Astrocyte of the cerebellum (primary cell): ENCODE measurements at regions of chr2 and their contacts with region 1.

Region 1: GRCh38 chr2:157194097-157194688 is 63.3 kb upstream of the GALNT5 start:
- DNase-seq: peak; percentile 64
- H3K4me3 ChIP-seq: no peak overlapping the region
- CTCF ChIP-seq: peak; percentile 69

Region 2: DNA sequence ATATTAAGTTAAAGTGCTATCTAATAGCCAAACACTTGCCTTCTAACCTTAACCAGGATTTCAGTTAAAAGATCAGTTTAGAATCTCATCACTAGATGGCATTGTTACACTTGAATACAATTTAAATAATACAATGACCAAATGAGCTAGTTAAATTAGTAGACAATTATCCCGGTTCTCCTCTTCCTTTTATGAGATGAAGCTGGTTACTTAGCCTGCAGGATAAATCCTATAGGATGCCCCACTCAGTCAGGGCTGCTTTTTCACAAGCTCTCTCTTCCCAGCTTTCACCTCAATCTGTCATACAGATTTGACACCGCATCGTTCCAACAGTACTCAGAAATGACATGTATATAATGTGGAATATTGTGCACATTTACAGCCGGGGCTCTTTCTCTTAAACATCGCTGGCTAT is 1816.9 kb before region 1 on chr2:
- in situ Hi-C with region 1: loop called (anchors 5 kb)
- DNase-seq: peak; percentile 18
- H3K4me3 ChIP-seq: no peak overlapping the region
- CTCF ChIP-seq: no peak

Region 3: GRCh38 chr2:156319811-156320485 is 874.2 kb before region 1 on chr2:
- in situ Hi-C with region 1: loop called (anchors 25 kb)
- DNase-seq: no peak
- H3K4me3 ChIP-seq: peak overlapping the region; percentile 36
- CTCF ChIP-seq: no peak

Region 4: DNA sequence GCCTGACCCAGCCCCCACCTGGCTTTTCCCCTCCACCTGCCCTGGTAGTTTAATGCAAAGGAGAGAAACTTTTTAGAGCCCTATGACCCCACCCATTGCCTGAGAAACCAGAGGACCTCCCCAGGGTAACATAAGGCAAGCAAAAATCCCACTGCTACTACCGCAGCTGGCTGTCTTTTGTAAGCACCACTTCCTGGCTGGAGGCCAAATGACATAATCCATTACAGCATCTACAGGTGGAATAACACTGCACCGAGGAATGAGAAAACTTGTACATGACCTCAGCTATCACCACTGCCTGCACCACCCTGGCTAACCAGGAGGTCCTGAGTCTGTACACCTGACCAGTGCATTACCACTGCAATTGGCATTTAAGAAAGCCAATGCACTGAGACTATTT is 86.3 kb before region 1 on chr2:
- in situ Hi-C with region 1: no loop called
- DNase-seq: peak; percentile 11
- H3K4me3 ChIP-seq: no peak overlapping the region
- CTCF ChIP-seq: no peak